Heart right ventricle (tissue), 16 donors: ENCODE measurements at regions of chr7 and their contacts with region 1.

Region 1: DNA sequence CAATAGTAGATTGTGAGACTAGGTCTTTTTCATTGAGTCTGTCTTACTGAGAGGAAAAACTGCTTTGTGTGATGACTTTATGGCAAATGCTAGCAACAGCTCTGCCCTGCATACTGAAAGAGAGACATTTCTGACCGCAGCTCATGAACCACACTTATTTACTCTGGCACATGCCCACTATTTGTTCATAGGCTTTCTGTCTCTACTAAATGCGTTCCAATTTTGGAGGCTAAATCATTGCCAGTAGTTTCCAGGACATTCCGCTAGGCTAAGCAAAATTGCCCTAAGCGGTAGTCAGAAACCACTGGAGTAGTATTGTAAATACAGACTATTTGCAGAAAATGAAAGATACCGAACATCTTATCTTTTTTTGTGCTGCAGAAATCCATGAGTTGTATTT is 55.6 kb upstream of the DLX6 start:
- DNase-seq: no peak
- ATAC-seq: no peak
- H3K4me3 ChIP-seq: no peak overlapping the region
- H3K27ac ChIP-seq: no peak overlapping the region
- H3K4me1 ChIP-seq: no peaks in the 10 kb centered on the region
- H3K27me3 ChIP-seq: peaks cover 0 to 9% (median 0%) of the 10 kb centered on the region in 7 donors
- CTCF ChIP-seq: no peak

Region 2: DNA sequence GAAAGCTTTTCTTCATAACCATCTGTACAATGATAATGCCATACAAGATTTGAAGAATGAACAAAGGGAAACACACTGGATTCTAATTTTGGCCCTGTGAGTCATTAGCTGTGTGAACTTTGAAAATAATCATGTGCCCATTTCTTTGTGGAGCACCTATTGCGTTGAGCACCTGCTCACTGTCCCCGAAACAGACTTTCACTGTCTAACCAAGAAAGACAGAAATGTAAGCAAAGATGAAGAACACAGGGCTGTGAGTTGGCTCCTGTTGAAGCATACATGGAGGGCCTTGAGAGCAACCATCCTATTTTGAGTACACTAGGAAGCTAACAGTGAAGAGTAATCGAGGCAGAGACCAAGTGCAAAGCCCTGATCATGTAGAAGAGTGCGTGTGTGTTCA is 509.4 kb before region 1 on chr7:
- intact Hi-C with region 1: no loop called
- DNase-seq: no peak
- ATAC-seq: no peak
- H3K4me3 ChIP-seq: no peak overlapping the region
- H3K27ac ChIP-seq: no peak overlapping the region
- H3K4me1 ChIP-seq: peaks cover 0 to 8% (median 0%) of the 10 kb centered on the region in 9 donors
- H3K27me3 ChIP-seq: no peaks in the 10 kb centered on the region
- CTCF ChIP-seq: no peak

Region 3: DNA sequence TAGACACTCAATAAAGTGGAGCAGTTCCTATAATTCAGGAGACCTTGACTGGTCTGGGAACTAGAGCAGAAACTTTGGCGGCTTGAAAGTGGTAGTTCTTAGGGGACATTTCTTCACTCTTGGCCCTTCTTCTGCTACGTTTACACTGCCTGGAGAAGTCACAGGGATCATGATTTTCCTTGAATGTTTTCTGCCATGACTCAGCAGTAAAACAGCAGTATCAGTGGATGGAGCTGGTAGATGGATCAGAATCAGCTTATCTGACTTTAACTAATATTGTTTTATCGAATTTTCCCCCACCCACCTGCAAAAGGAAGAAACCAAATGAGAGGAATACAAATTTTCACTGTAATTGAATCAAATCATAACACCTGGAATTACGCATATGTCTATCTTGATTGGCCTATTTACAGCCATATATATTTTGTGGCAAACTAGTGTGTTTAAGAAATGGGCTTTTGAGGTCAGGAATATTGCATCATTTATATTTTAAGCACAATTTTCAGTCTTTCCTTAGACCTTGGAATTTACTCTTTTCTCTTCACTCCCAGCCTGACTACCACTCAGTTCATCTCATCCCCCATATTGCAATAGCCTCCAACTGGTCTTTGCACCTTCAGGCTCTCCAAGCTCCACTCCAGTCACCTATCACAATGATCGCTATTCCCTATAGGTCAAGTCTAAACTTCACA is 89.8 kb after region 1 on chr7:
- intact Hi-C with region 1: loop called in 1 of 10 experiments (anchors 10 kb)
- DNase-seq: no peak
- ATAC-seq: no peak
- H3K4me3 ChIP-seq: no peak overlapping the region
- H3K27ac ChIP-seq: no peak overlapping the region
- H3K4me1 ChIP-seq: no peaks in the 10 kb centered on the region
- H3K27me3 ChIP-seq: peaks cover 0 to 67% (median 40%) of the 10 kb centered on the region in 7 donors
- CTCF ChIP-seq: no peak